Posterior vena cava (tissue), 2 donors: ENCODE measurements at regions of chr14 and their contacts with region 1.

Region 1: DNA sequence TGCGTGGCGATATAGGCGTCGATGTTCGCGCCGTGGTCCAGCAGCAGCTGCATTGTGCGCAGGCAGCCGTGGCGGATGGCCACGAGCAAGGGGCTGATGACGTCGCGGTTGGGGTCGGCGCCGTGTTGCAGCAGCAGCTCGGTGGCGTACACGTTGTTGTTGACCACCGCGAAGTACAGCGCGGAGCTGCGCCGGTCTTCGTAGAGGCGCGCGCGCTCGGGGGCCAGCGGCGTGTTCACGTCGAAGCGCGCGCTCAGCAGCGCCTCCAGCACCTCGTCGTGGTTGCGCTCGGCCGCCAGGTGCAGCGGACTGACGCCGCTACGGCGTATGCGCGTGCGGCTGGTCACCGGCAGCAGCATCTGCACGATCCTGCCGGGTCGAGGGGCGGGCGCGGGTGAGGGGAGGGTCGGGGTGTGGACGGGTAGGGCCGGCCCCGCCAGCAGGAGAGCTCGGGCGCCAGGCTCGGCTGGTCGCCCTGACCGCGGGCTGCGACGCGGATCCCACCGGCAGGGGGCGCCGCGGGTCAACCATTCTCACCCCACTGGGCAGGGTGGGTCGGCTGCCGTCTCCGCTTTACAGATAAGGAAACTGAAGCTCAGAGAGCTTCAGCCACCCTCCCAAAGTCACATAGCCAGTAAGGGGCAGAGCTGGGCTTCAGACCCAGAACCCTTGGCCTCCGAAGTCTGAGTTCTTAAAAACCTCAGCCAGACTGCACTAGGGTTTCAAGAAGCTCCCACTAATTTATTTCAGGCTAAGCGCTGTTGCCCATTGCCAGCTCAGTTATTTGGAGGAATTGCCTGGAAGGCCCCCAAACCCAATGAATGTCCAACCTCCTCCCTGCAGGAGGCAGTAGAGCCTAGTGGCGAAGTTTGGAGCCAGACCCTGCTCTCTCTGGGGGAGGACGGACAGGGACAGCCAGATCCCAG is 12.4 kb downstream of the FAM181A start:
- DNase-seq: peak; percentile 95

Region 2: DNA sequence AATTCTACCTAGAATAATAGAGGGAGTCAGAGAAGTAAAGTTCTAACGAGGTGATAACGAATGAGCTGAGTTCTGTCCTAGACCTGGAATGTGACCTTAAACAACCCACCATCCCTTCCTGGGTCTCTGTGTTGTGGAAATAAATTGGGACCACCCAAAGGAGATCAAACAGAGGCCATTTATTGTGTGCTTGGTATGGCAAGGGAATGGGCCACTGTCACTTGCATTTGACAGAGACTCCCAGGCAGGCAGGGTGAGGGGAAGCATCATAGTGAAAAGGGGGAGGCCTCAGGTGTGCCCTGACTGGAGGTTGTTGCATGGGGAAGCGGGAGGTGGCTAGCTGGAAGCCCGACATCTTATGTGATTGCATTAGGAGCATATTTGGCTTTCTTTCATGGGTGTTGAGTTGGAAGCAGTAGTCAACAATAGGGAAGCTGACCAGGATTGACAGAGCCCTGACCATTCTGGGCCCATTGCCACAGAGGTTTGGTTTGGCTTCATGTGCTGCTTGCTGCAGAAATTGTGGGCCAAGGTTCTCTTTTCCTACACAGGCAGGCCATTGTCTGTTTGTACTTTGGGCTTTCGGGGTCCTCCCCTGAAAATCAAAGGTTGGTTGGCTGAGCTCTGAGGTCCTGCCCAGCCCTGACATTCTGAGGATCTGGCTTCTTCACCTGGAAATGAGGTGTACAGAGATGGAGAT is 30.0 kb before region 1 on chr14:
- intact Hi-C with region 1: no loop called
- DNase-seq: peak; percentile 40

Region 3: GRCh38 chr14:93954900-93955849 is 15.6 kb after region 1 on chr14:
- intact Hi-C with region 1: no loop called
- DNase-seq: no peak

Region 4: DNA sequence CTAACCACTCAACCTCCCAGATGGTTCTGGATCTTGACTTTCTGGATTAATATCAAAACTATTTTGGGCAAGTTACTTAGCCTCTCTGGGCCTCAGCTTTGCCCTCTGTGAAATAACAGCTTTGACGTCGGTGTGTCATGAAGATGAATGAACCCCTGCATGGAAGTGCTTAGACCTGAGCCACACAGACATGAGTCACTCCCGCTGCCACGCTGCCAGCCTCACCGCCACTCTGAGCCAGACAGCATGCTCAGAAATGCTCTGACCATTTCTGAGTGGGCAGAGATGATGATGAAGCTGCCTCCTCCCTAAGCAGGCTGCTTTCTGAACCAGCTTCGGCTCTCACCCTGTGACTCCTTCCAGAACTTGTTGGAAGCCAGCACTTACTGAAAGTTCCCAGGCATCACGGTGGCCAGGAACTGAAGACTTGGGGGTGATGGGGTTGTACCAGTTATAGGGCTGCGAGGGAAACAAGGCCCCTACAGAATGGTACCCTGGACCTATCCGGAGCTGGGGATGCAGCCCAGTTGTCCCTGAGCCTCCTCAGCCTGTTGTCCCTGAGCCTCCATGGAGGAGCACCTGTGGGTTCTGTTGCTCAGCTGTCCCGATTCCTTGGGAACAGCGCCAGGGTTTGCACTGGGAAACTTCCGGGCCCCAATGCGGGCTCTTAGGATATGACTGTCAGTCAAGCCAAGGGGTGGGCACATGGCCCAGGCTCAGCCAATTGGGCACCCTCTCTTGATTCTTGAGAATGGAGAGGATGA is 55.5 kb after region 1 on chr14:
- intact Hi-C with region 1: loop called (anchors 2 kb)
- DNase-seq: no peak

Region 5: DNA sequence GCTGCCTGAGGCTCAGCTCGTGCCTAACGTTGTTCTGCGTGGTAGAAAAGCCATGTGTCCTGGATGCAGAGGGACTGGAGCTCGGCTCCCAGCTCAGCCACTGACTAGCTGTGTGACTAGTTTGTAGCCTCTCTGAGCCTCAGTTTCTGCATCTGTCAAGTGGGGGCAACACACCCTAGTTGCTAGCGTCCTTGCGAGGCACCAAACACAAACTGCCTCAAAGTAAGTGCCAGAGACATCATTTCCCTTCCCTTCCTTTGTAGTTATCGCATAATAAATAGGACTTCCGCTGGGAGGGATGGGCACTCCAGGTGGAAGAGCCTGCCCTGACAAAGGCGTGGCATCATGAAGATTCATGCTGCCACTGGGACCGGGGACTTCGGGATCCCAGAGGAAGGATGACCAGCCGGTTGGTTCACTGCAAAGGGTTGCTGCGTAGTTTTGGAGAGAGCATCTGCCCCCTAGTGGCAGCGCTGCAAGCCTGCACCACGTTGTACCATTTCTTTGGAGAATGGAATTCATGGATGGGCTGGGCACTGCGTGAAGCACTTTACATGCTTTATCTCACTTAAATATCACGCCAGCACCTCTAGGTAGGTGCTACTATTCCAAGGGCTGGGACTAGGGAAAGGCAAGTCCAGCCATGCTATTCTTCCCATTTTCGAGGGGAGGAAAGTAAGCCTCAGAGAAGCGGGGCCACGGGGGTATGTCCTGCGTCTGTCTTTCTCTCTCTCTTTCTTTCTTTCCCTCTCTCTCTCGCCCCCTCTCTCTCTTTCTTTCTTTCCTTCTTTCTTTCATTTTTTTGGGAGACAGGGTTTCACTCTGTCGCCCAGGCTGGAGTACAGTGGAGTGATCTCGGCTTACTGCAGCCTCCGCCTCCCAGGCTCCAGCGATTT is 62.2 kb after region 1 on chr14:
- intact Hi-C with region 1: loop called (anchors 2 kb)
- DNase-seq: peak; percentile 86

Region 6: DNA sequence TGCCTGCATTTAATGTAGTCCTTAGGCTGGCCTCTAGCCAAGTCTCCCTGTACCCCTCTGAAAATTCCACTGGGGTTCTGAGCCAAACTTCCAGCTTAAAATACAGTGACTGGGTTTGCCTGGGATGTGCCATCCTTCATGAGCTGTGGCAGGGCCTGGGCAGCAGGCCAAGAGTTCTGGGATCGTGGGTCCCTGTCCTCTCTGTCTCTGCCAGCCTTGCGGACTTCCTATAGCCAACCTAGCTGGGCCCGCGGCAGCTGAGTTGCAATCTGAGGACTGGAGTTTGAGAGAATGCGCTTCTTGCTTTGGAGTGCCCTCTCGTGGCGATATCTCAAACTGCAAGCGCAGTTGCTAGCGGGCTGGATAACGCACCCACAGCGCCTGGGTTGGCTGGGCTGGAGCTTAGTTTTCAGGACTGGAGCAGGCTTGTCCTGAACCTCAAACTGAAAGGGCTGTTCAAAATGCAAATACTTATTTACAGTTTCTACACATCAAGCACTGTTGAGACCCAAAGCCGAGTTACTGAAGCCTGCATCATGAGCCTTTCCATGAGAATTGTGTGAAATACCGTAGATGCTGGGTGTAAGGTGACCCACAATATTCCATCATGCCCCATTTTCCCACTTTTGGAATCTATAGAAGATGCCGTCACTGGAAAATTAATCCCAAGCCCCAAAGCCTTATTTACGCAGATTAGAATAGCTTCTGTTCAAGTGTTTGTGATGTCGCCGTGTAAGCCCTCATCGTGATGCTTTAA is 197.2 kb after region 1 on chr14:
- intact Hi-C with region 1: loop called in 1 of 2 experiments (anchors 10 kb)
- DNase-seq: peak; percentile 96